Mammary epithelial cell (primary cell): ENCODE measurements at regions of chr11 and their contacts with region 1.

Region 1: GRCh38 chr11:14892036-14892567 is at the start of gene CYP2R1:
- DNase-seq: peak; percentile 97
- H3K4me3 ChIP-seq: peak within 1 kb of the TSS; percentile 52 to 66 (median 62)
- H3K27ac ChIP-seq: peak within 1 kb of the TSS; percentile 55
- H3K4me1 ChIP-seq: no peaks in the 10 kb centered on the region
- H3K27me3 ChIP-seq: no peaks in the 10 kb centered on the region
- CTCF ChIP-seq: no peak
- total RNA-seq, gene CYP2R1: 15.3 to 15.4 TPM

Region 2: GRCh38 chr11:14643697-14644225 is 248.3 kb before region 1 on chr11 and contains the start of gene PDE3B:
- CTCF ChIA-PET with region 1: no interaction called
- dilution Hi-C with region 1: no loop called
- in situ Hi-C with region 1: no loop called
- intact Hi-C with region 1: loop called (anchors 5 kb)
- DNase-seq: peak; percentile 3
- H3K4me3 ChIP-seq: peak within 1 kb of the TSS; percentile 47 to 58 (median 54)
- H3K27ac ChIP-seq: no peak within 1 kb of the TSS
- H3K4me1 ChIP-seq: peaks cover 14% of the 10 kb centered on the region
- H3K27me3 ChIP-seq: peaks cover 46% of the 10 kb centered on the region
- CTCF ChIP-seq: no peak
- total RNA-seq, gene PDE3B: not detected

Region 3: DNA sequence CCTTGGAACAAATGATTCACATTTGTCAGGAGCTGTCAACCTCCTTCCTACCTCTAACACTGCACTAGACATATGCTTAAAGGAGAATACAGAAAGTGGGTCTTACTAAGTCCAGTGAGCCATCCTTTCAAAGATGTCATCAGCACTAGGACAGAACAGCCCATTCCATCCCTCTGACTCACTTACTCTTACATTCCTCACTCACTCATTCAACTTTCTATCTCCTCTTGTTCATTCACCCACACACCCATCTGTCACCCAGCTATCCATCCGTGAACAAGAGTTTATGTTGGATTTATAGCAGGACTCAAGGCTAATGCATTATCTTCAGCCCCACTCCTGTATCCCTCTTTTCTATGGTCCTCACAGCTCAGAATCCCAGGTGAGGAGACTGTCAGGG is 231.7 kb after region 1 on chr11:
- CTCF ChIA-PET with region 1: no interaction called
- dilution Hi-C with region 1: no loop called
- in situ Hi-C with region 1: no loop called
- intact Hi-C with region 1: no loop called
- DNase-seq: peak; percentile 76
- H3K4me3 ChIP-seq: no peak overlapping the region
- H3K27ac ChIP-seq: no peak overlapping the region
- H3K4me1 ChIP-seq: peaks cover 39% of the 10 kb centered on the region
- H3K27me3 ChIP-seq: no peaks in the 10 kb centered on the region
- CTCF ChIP-seq: no peak